ENCODE measurements at regions of chr1 and their contacts with region 1.

Region 1: DNA sequence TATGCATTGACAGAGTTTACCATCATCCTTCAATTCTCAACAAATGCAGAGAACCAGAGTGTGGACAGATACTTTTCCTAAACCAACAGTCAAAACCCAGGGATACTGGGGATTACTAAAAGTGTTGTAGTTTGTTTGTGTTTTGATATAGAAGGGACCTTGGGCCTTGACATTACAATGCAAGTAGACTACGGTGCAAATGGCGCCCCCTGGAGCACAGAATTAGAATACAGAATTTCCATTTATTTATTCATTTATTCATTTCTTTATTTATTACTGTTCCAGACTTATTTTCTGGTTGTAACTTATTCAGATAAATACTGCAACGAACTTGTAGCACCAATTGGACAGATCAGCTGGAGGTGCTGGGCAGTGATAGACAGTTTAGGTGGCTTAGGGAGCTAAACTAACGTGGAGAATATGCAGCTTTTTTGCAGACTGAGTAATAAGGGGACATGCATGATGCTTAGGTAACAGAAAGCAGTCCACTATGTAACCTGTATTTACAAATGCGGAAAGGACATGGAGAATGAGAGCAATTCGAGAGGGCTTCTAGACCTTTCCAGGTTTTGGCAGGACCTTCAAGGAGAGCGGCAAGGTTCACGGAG is 42.6 kb downstream of the KIRREL1 start:
- DNase-seq: no peak
- H3K4me3 ChIP-seq: no peak overlapping the region
- H3K27me3 ChIP-seq: no peaks in the 10 kb centered on the region
- CTCF ChIP-seq: peak; percentile 64

Region 2: GRCh38 chr1:158025576-158026230 is 10.4 kb before region 1 on chr1:
- CTCF ChIA-PET with region 1: interaction called, 16 read pairs
- POLR2A ChIA-PET with region 1: no interaction called
- DNase-seq: no peak
- H3K4me3 ChIP-seq: no peak overlapping the region
- H3K27me3 ChIP-seq: no peaks in the 10 kb centered on the region
- CTCF ChIP-seq: no peak

Region 3: GRCh38 chr1:158117854-158118704 is 82.0 kb after region 1 on chr1:
- CTCF ChIA-PET with region 1: interaction called, 13 read pairs
- POLR2A ChIA-PET with region 1: no interaction called
- DNase-seq: no peak
- H3K4me3 ChIP-seq: no peak overlapping the region
- H3K27me3 ChIP-seq: peaks cover 7% of the 10 kb centered on the region
- CTCF ChIP-seq: peak; percentile 71

Region 4: GRCh38 chr1:158155673-158156072 is 119.6 kb after region 1 on chr1:
- CTCF ChIA-PET with region 1: no interaction called
- POLR2A ChIA-PET with region 1: no interaction called
- DNase-seq: no peak
- H3K4me3 ChIP-seq: no peak overlapping the region
- H3K27me3 ChIP-seq: no peaks in the 10 kb centered on the region
- CTCF ChIP-seq: no peak

Measured in BJ (cell line).